Activated CD4-positive, alpha-beta T cell treated with anti-CD3 and anti-CD28 coated beads for 36 hours (primary cell): ENCODE measurements at regions of chr10 and their contacts with region 1.

Region 1: GRCh38 chr10:69639291-69640195 is 9.5 kb downstream of the FAM241B start:
- DNase-seq: peak; percentile 81
- ATAC-seq: peak; percentile 76
- H3K4me3 Mint-ChIP-seq: no peak overlapping the region
- H3K27ac Mint-ChIP-seq: no peak overlapping the region
- H3K4me1 Mint-ChIP-seq: no peaks in the 10 kb centered on the region
- H3K27me3 Mint-ChIP-seq: no peaks in the 10 kb centered on the region

Region 2: GRCh38 chr10:69425511-69426298 is 213.8 kb before region 1 on chr10:
- CTCF ChIA-PET with region 1: interaction called, 3 read pairs
- POLR2A ChIA-PET with region 1: no interaction called
- intact Hi-C with region 1: loop called in 1 of 2 experiments (anchors 2 kb)
- DNase-seq: no peak
- ATAC-seq: peak; percentile 55
- H3K4me3 Mint-ChIP-seq: no peak overlapping the region
- H3K27ac Mint-ChIP-seq: peak overlapping the region; percentile 3
- H3K4me1 Mint-ChIP-seq: peaks cover 40% of the 10 kb centered on the region
- H3K27me3 Mint-ChIP-seq: no peaks in the 10 kb centered on the region

Region 3: GRCh38 chr10:69800109-69800508 is 160.6 kb after region 1 on chr10:
- CTCF ChIA-PET with region 1: interaction called, 3 read pairs
- POLR2A ChIA-PET with region 1: no interaction called
- intact Hi-C with region 1: loop called (anchors 1 to 10 kb)
- DNase-seq: peak; percentile 32
- ATAC-seq: no peak
- H3K4me3 Mint-ChIP-seq: no peak overlapping the region
- H3K27ac Mint-ChIP-seq: no peak overlapping the region
- H3K4me1 Mint-ChIP-seq: peaks cover 8% of the 10 kb centered on the region
- H3K27me3 Mint-ChIP-seq: peaks cover 43% of the 10 kb centered on the region